ENCODE measurements at regions of chr19 and their contacts with region 1.

Region 1: DNA sequence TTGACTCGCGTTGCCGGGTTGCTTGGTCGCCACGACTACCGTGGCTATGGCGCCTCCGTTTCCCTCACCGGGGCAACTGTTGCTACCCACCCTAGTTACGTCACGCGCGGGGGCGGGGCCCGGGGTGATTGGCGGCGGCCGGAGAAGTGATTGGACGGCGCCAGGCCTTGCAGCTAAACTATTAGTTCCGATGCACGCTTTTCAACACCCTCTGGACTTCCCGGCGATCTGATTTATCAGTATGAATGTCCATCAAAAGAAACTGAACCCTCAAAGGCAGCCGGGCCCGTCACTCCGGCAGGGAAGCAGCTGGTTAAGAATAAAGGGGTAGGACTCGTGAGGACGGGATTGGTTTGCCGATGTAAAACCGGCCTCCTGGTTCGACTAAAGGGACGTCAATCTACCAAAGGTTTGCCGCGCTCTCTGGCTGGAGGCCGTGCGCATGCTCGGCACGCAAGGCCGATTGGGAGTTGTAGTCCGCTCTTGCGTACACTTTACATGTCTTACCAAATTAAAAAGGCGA is at the start of gene RFX1:
- H3K4me3 Mint-ChIP-seq: peak within 1 kb of the TSS; percentile 95
- H3K27ac Mint-ChIP-seq: peak within 1 kb of the TSS; percentile 100
- H3K4me1 Mint-ChIP-seq: peaks cover 61% of the 10 kb centered on the region
- H3K27me3 Mint-ChIP-seq: no peaks in the 10 kb centered on the region

Region 2: DNA sequence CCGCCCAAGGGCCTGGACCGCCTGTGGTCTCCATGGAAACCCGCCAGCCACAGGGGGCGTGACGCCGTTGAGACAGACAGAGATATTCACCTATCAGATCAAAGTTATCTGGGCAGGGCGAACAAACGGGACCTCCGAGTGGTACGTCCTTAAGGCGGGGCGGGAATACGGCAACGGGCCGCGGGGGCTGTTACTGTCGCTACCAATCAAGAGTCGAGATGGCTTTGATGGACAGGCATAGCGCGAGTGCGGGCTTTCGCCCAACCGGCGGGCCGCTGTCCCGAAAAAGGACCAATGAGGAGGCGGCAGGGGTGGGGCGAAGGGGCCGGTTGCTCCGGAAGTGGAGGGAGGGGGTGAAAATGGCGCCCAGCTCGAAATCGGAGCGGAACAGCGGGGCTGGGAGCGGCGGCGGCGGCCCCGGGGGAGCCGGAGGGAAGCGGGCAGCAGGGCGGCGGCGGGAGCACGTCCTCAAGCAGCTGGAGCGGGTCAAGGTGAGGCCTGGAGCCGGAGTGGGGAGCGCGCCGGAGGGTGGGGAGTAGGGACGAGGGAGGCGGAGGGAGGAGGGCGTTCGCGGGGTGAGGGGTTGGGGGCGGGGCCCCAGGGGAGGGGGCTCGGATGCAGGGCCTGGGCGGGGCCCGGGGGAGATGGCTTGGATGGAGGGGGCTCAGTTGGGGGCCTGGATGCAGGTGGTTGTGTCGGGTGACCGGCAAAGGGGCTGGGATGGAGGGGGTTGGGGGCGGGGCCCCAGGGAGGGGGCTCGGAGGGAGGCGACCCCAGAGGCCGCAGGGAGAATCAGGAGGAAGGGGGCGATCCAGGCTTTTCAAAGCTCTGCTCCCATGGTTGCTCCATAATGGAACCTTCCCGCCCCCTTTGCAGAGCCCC is 53.9 kb before region 1 on chr19 and contains the start of gene DCAF15:
- intact Hi-C with region 1: loop called (anchors 1 kb)
- H3K4me3 Mint-ChIP-seq: peak within 1 kb of the TSS; percentile 94
- H3K27ac Mint-ChIP-seq: peak within 1 kb of the TSS; percentile 90
- H3K4me1 Mint-ChIP-seq: peaks cover 27% of the 10 kb centered on the region
- H3K27me3 Mint-ChIP-seq: peaks cover 2% of the 10 kb centered on the region

Region 3: DNA sequence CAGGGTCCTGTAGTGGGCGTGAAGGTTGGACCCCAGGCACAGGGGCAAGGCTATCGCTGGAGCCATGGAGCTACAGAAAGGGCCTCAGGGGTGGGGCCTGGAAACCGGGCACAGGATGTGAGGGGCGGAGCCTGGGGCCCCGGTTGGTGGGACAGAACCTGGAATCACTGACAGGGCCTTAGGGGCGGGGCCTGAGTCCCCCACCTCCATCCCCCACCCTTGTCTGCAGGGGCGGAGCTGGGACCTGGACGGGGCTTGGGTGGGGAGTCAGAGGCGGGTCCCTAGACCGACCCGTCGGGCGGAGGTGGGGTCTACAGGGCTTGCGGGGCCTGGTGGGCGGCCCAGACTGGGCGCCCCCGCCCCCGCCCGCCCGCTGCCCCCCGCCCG is 28.0 kb before region 1 on chr19:
- intact Hi-C with region 1: loop called (anchors 2 kb)
- H3K4me3 Mint-ChIP-seq: peak overlapping the region; percentile 71
- H3K27ac Mint-ChIP-seq: peak overlapping the region; percentile 86
- H3K4me1 Mint-ChIP-seq: peaks cover 45% of the 10 kb centered on the region
- H3K27me3 Mint-ChIP-seq: no peaks in the 10 kb centered on the region

Region 4: GRCh38 chr19:13986348-13986904 is 19.9 kb before region 1 on chr19:
- intact Hi-C with region 1: loop called (anchors 2 kb)
- H3K4me3 Mint-ChIP-seq: peak overlapping the region; percentile 73
- H3K27ac Mint-ChIP-seq: peak overlapping the region; percentile 100
- H3K4me1 Mint-ChIP-seq: peaks cover 76% of the 10 kb centered on the region
- H3K27me3 Mint-ChIP-seq: no peaks in the 10 kb centered on the region

Region 5: GRCh38 chr19:14023404-14024235 is 17.3 kb after region 1 on chr19:
- intact Hi-C with region 1: loop called (anchors 2 kb)
- H3K4me3 Mint-ChIP-seq: no peak overlapping the region
- H3K27ac Mint-ChIP-seq: peak overlapping the region; percentile 93
- H3K4me1 Mint-ChIP-seq: peaks cover 36% of the 10 kb centered on the region
- H3K27me3 Mint-ChIP-seq: no peaks in the 10 kb centered on the region

Region 6: GRCh38 chr19:14048443-14049153 is 42.3 kb after region 1 on chr19:
- intact Hi-C with region 1: loop called (anchors 5 kb)
- H3K4me3 Mint-ChIP-seq: no peak overlapping the region
- H3K27ac Mint-ChIP-seq: no peak overlapping the region
- H3K4me1 Mint-ChIP-seq: peaks cover 7% of the 10 kb centered on the region
- H3K27me3 Mint-ChIP-seq: peaks cover 3% of the 10 kb centered on the region

Region 7: DNA sequence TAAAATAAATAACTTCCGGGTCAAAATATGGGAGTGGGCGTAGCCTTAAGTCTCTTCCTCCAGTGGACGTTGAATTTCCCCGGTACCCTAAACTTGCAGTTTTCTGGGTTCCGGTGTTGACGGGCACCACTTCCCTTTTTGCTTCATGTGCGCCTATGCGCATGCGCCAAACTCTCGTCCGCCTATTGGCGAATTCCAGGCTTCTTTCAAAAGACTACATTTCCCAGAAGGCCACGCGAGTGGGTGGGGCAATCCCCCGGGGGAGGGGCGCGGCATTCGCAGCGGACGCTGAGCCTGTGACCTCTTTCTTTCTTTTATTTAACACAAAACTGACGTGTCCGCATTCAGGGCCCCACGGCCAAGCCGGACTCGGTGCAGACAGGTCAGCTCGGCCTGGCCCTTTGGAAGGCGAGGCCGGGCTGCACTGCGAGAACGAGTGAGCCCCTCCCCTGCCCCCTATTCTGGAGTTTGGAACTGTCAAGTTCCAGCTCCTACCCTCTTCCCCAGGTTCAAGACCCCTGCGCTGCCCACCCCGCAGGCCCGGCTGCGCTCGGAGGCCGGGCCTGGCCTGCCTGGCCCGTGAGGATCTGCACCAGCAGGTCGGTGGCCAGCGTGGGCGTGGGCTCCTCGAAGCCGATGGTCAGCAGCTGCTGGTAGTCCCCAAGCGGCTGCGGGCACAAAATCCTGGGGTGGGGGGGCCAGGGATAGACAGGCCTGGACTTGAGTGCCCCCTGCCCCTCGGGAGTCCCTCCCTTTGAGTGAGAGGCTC is 75.2 kb after region 1 on chr19:
- intact Hi-C with region 1: no loop called
- H3K4me3 Mint-ChIP-seq: peak overlapping the region; percentile 93
- H3K27ac Mint-ChIP-seq: peak overlapping the region; percentile 93
- H3K4me1 Mint-ChIP-seq: peaks cover 33% of the 10 kb centered on the region
- H3K27me3 Mint-ChIP-seq: no peaks in the 10 kb centered on the region